CD8-positive, alpha-beta memory T cell (primary cell): ENCODE measurements at regions of chr7 and their contacts with region 1.

Region 1: DNA sequence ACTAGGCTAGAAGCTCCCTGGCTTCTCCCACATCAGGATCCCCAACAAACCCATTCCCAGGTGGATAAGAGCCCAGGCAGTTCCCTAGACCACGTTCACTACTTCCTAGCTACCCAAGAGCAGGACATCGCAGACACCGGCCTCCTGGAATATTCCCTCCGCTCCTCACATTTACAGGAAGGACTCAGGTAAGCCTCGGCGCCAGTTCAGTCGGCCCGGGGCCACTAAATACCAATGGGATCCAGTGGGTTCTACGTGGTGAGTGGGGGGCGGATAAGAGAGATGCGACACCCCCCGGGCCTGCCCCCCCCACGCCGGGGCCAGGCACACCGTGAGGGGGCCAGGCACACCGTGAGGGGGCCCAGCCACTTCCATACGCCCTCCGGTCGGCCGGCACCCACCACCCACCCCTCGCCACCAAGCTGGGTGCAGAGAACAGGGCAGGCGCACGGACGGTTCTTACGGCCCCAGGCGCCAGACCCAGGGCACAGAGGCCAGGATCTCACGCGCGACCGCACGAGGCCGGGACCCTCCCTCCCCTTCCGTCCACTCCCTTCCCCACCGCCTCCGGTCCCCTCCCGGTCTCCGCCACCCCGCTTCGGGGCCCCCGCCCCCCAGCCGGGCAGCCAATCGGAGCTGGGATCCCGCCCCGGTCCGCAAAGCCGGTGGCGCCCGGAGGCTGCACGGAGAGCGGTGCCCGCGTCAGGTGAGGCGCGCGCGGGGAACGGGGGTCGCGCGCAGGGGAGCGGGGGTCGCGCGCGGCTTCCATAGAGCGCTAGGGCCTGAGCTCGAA is at the start of gene BLVRA:
- DNase-seq: peak; percentile 59 to 81 (median 64)
- H3K4me3 ChIP-seq: peak within 1 kb of the TSS; percentile 82
- H3K4me3 Mint-ChIP-seq: peak within 1 kb of the TSS; percentile 81 to 94 (median 87)
- H3K27ac ChIP-seq: peak within 1 kb of the TSS; percentile 79
- H3K27ac Mint-ChIP-seq: peak within 1 kb of the TSS in 7 of 8 donors; percentile 57 to 94 (median 90)
- H3K4me1 ChIP-seq: peaks cover 11% of the 10 kb centered on the region
- H3K4me1 Mint-ChIP-seq: peaks cover 26 to 46% (median 31%) of the 10 kb centered on the region in 3 donors
- H3K27me3 ChIP-seq: no peaks in the 10 kb centered on the region
- H3K27me3 Mint-ChIP-seq: peaks cover 0 to 1% of the 10 kb centered on the region in 2 donors
- total RNA-seq, gene BLVRA: 26.8 to 30.1 TPM

Region 2: GRCh38 chr7:43569424-43569823 is 188.8 kb before region 1 on chr7:
- CTCF ChIA-PET with region 1: no interaction called
- POLR2A ChIA-PET with region 1: no interaction called
- DNase-seq: no peak
- H3K4me3 ChIP-seq: no peak overlapping the region
- H3K4me3 Mint-ChIP-seq: no peak overlapping the region
- H3K27ac ChIP-seq: no peak overlapping the region
- H3K27ac Mint-ChIP-seq: no peak overlapping the region
- H3K4me1 ChIP-seq: no peaks in the 10 kb centered on the region
- H3K4me1 Mint-ChIP-seq: peaks cover 0 to 5% (median 5%) of the 10 kb centered on the region in 3 donors
- H3K27me3 ChIP-seq: no peaks in the 10 kb centered on the region
- H3K27me3 Mint-ChIP-seq: peaks cover 3 to 6% of the 10 kb centered on the region in 2 donors

Region 3: DNA sequence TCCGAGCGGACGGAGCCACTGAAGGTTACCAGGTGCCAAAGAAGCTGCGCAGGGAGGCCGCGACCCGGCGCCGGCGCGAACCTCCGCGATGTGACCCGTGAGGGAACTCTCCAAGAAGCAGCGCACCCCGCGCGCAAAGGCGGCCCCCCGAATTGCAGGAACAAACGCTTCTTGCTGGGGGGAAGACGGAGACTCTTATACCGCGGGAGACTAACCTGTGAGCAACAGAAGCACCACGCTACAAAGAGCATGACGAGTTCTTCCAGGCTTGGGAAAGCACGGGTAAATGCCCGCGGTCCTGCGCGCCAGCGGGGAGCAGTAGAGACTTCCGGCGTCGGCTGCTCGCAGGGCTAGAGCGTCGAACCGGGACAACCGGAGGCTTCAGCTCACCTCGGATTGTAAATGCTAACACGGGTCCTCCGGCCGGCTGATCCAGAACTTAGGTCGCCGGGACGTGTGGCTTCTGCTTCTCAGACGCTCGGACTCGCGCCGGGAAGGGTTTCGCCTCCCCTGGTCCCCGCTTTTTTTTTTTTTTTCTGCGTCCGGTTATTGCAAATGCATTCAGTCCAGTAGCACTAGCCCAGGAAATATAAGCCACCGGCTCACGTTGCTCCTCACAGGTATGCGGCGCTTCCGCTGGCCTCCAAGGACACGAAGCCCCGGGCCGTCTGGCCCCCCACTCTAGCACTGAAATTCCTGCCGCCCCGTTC is 28.9 kb before region 1 on chr7 and contains the start of gene COA1:
- CTCF ChIA-PET with region 1: no interaction called
- POLR2A ChIA-PET with region 1: interaction called, 11 read pairs
- DNase-seq: peak; percentile 63 to 83 (median 79)
- H3K4me3 ChIP-seq: peak within 1 kb of the TSS; percentile 95
- H3K4me3 Mint-ChIP-seq: peak within 1 kb of the TSS; percentile 91 to 100 (median 95)
- H3K27ac ChIP-seq: peak within 1 kb of the TSS; percentile 86
- H3K27ac Mint-ChIP-seq: peak within 1 kb of the TSS; percentile 82 to 94 (median 90)
- H3K4me1 ChIP-seq: peaks cover 23% of the 10 kb centered on the region
- H3K4me1 Mint-ChIP-seq: peaks cover 34 to 51% (median 41%) of the 10 kb centered on the region in 3 donors
- H3K27me3 ChIP-seq: no peaks in the 10 kb centered on the region
- H3K27me3 Mint-ChIP-seq: no peaks in the 10 kb centered on the region
- total RNA-seq, gene COA1: 75.9 to 81.6 TPM